ENCODE measurements at regions of chr6 and their contacts with region 1.

Region 1: DNA sequence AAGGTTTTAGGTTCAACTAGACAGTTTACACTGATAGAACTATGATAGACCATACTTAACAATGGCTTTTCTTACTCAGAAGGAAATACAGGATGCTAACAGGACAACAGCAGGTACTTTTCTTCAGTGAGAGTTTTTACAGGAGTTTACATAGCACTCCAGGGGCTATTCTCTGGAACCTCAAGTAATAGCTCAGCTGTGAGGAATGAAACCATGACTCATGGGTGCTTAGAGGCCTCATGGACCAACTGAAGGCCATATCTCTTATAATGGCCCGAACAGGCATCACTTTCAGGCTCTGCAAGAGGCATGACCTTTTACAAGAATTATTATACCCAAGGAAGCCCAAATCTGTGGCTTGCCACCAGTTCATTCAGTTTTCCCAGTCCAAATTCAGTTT is 31.8 kb downstream of the TREML1 start:
- DNase-seq: no peak
- H3K4me3 ChIP-seq: no peak overlapping the region
- H3K27ac ChIP-seq: no peak overlapping the region
- H3K4me1 ChIP-seq: no peaks in the 10 kb centered on the region
- H3K27me3 ChIP-seq: no peaks in the 10 kb centered on the region
- CTCF ChIP-seq: no peak

Region 2: GRCh38 chr6:40874495-40874894 is 247.9 kb before region 1 on chr6:
- CTCF ChIA-PET with region 1: no interaction called
- POLR2A ChIA-PET with region 1: no interaction called
- intact Hi-C with region 1: no loop called
- DNase-seq: no peak
- H3K4me3 ChIP-seq: no peak overlapping the region
- H3K27ac ChIP-seq: no peak overlapping the region
- H3K4me1 ChIP-seq: no peaks in the 10 kb centered on the region
- H3K27me3 ChIP-seq: peaks cover 69% of the 10 kb centered on the region
- CTCF ChIP-seq: no peak

Region 3: DNA sequence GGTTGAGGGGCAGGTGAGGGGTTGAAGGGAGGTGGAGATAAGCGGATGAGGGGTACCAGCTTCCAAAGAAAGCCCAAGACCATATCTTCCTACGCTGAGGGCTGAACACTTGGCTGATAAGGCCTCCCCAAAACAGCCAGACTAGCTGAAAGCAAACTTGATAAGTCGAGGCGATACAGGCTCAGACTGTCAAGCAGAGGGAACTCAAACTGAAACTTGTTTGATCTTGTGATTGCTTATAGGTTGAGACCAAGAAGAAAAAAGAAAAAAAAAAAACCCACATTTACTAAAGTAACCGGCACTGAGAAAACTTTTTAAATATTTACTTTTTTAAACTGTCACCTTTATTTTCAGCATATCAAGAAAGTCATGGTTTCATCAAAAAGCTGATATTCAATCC is 1255.8 kb after region 1 on chr6:
- CTCF ChIA-PET with region 1: no interaction called
- POLR2A ChIA-PET with region 1: interaction called, 16 read pairs
- intact Hi-C with region 1: no loop called
- DNase-seq: no peak
- H3K4me3 ChIP-seq: no peak overlapping the region
- H3K27ac ChIP-seq: no peak overlapping the region
- H3K4me1 ChIP-seq: no peaks in the 10 kb centered on the region
- H3K27me3 ChIP-seq: no peaks in the 10 kb centered on the region
- CTCF ChIP-seq: no peak

Measured in PC-9 (cell line).